K562 (cell line): ENCODE measurements at regions of chr1 and their contacts with region 1.

Region 1: GRCh38 chr1:201608635-201609395 is 69.9 kb downstream of the NAV1 start:
- DNase-seq: no peak
- ATAC-seq: peak; percentile 11; the same call in 2 of the 3 replicates
- H3K4me3 ChIP-seq: no peak overlapping the region
- H3K27ac ChIP-seq: no peak overlapping the region
- H3K4me1 ChIP-seq: peaks cover 0 to 6% of the 10 kb centered on the region in 2 experiments; a peak in 1 of 5 replicates
- H3K27me3 ChIP-seq: no peaks in the 10 kb centered on the region; a peak in 1 of 5 replicates
- CTCF ChIP-seq: no peak
- EP300 ChIP-seq: no peak
- POLR2A ChIP-seq: no peak
- RAD21 ChIP-seq: no peak

Region 2: DNA sequence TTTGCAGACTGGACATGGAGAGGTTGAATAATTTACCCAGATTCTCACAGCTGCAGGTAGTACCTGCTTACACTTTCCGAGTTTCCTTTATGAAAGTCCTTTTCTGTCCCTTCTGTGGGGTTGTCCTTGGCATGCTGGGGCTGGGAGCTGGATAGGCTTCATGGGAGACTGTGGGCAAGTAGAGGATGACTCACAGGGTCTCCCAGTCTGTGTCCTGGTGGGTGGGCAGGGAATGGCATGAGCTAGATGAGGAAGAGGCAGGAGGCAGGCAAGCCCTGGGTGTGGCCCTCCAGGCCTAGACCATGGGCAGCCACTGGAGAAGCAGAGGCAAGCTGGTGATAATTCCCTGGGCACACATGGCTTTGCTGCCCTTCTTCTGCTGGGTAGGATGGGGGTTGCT is 10.7 kb after region 1 on chr1:
- CTCF ChIA-PET with region 1: no interaction called
- POLR2A ChIA-PET with region 1: interaction called, 18 read pairs
- in situ Hi-C with region 1: no loop called
- intact Hi-C with region 1: no loop called
- DNase-seq: no peak
- ATAC-seq: no peak
- H3K4me3 ChIP-seq: no peak overlapping the region
- H3K27ac ChIP-seq: no peak overlapping the region
- H3K4me1 ChIP-seq: peaks cover 3 to 8% of the 10 kb centered on the region in 2 experiments; a peak in 4 of 5 replicates
- H3K27me3 ChIP-seq: peaks cover 0 to 3% of the 10 kb centered on the region in 2 experiments; a peak in 1 of 5 replicates
- CTCF ChIP-seq: no peak
- EP300 ChIP-seq: no peak
- POLR2A ChIP-seq: no peak
- RAD21 ChIP-seq: no peak

Region 3: DNA sequence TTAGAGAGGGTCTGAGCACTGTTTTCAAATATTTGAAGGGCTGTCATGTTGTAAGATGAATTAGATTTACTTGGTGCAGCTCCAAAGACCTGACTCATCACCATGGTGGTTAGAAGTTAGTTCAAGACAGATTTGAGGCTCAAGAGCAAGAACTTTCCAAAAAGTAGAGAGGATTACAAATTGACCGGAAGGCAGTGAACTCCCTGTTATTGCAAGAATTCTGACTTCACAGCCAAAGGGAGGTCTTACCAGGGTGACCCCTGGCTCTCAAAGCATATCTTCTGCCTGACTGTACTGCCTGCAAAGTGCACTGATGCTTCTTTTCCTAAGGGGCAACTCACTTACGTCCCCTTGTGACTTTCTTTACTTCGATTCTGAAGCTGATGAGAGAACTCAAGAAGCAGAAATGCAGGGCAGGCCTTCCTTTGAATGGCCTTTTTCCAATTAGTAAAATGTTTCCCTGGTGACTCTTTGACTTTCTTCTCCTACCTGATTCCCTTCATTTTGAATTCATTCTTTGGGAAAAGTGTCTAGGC is 16.5 kb after region 1 on chr1:
- CTCF ChIA-PET with region 1: no interaction called
- POLR2A ChIA-PET with region 1: interaction called, 18 read pairs
- in situ Hi-C with region 1: no loop called
- intact Hi-C with region 1: no loop called
- DNase-seq: no peak
- ATAC-seq: peak; percentile 26
- H3K4me3 ChIP-seq: no peak overlapping the region
- H3K27ac ChIP-seq: no peak overlapping the region
- H3K4me1 ChIP-seq: peaks cover 3 to 23% of the 10 kb centered on the region in 2 experiments; a peak in 4 of 5 replicates
- H3K27me3 ChIP-seq: no peaks in the 10 kb centered on the region
- CTCF ChIP-seq: no peak
- EP300 ChIP-seq: no peak
- POLR2A ChIP-seq: no peak
- RAD21 ChIP-seq: peak in 1 of 2 experiments; percentile 19; a peak in 1 of 4 replicates